ENCODE measurements at regions of chr17 and their contacts with region 1.

Region 1: DNA sequence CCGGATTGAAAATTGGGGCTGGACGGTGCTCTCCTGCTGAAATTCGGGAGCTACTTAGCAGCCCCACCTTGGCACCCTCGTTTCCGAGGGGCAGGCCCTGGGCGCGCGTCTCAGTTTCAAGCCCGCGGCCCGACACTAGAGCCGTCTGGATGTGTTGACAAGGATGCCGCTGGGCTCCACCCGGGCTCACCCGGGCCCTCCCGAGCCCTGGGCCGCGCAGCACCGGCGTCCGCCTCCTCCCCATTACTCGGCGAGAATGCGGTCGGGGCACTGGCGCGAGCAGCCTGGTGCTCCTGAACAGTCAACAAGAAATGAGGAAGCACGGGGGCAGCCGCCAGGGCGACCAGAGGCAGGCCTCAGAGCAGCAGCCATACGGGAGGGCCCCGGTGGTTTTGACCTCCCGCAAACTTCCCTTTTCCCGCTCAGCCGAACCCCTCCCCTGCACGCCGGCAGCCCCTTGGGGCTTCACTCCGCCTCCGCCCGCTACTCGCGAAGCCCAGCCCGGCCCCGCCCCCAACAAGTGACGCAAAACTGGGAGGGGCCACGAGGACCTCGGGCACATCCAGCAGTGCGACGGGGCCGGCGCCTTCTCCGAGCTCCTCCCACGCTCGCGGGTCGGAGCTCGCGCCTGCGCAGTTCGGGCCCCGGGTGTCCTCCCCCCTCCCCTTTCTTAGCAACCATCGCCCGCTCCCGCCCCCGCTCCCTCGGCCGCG is 447 bp upstream of the SEC14L1 start:
- DNase-seq: peak; percentile 98 to 100 (median 100)
- ATAC-seq: peak; percentile 86 to 87
- H3K4me3 Mint-ChIP-seq: peak overlapping the region; percentile 69 to 90 (median 83)
- H3K27ac Mint-ChIP-seq: peak overlapping the region; percentile 77 to 96 (median 94)
- H3K4me1 Mint-ChIP-seq: peaks cover 17 to 69% (median 51%) of the 10 kb centered on the region in 4 donors
- H3K27me3 Mint-ChIP-seq: no peaks in the 10 kb centered on the region

Region 2: GRCh38 chr17:76753061-76753961 is 387.0 kb before region 1 on chr17:
- POLR2A ChIA-PET with region 1: interaction called, 10 read pairs
- DNase-seq: peak in 9 of 10 donors; percentile 23 to 92 (median 71)
- ATAC-seq: peak; percentile 90 to 94
- H3K4me3 Mint-ChIP-seq: peak overlapping the region; percentile 84 to 96 (median 90)
- H3K27ac Mint-ChIP-seq: peak overlapping the region; percentile 90 to 100 (median 99)
- H3K4me1 Mint-ChIP-seq: peaks cover 14 to 25% (median 24%) of the 10 kb centered on the region in 4 donors
- H3K27me3 Mint-ChIP-seq: no peaks in the 10 kb centered on the region

Region 3: DNA sequence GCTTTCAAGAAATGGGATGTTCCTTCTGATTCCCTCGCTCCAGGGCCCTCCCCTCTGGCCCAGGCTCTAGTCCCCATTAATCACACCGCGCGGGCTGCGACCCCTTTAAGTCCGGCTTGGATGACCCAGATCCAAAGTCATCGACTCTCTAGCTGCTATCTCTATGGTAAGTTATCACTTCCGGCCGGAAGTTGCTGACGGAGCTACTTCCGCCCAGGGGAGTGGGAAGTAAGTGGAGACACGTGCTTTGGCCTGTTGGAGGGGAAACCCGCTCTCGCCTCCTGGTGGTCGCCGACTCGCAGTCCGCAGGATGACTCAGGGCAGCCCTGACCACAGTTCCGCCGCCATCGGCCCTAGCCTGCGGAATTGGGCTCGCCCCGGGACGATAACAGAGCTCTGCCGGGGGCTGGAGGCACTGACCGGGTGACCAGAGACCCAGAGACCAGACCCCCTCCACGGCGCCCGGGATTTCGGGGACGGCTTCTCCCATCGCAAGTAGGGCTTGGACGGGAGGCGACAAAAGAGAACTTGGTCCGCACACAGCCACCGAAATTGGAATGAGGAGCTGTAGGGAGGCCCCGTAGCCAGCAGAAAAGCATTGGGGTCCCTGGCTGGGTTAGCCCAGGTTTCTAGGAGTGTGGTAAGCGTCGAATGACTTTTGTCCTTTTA is 51.7 kb before region 1 on chr17:
- POLR2A ChIA-PET with region 1: interaction called, 37 read pairs
- DNase-seq: peak; percentile 61 to 92 (median 84)
- ATAC-seq: peak; percentile 91 to 92
- H3K4me3 Mint-ChIP-seq: peak overlapping the region; percentile 87 to 100 (median 97)
- H3K27ac Mint-ChIP-seq: peak overlapping the region; percentile 94 to 99 (median 99)
- H3K4me1 Mint-ChIP-seq: peaks cover 19 to 62% (median 50%) of the 10 kb centered on the region in 4 donors
- H3K27me3 Mint-ChIP-seq: peaks cover 0 to 7% (median 0%) of the 10 kb centered on the region in 5 donors

Region 4: GRCh38 chr17:77098884-77099545 is 41.3 kb before region 1 on chr17:
- POLR2A ChIA-PET with region 1: interaction called, 12 read pairs
- DNase-seq: peak in 8 of 10 donors; percentile 42 to 82 (median 70)
- ATAC-seq: peak; percentile 95 to 98
- H3K4me3 Mint-ChIP-seq: peak overlapping the region; percentile 34 to 70 (median 56)
- H3K27ac Mint-ChIP-seq: peak overlapping the region; percentile 91 to 99 (median 94)
- H3K4me1 Mint-ChIP-seq: peaks cover 21 to 42% (median 36%) of the 10 kb centered on the region in 4 donors
- H3K27me3 Mint-ChIP-seq: no peaks in the 10 kb centered on the region

Region 5: GRCh38 chr17:77127735-77128361 is 12.5 kb before region 1 on chr17:
- POLR2A ChIA-PET with region 1: interaction called, 48 read pairs
- DNase-seq: peak; percentile 42 to 94 (median 79)
- ATAC-seq: peak; percentile 92 to 95
- H3K4me3 Mint-ChIP-seq: peak overlapping the region; percentile 70 to 89 (median 78)
- H3K27ac Mint-ChIP-seq: peak overlapping the region; percentile 88 to 98 (median 96)
- H3K4me1 Mint-ChIP-seq: peaks cover 12 to 40% (median 28%) of the 10 kb centered on the region in 4 donors
- H3K27me3 Mint-ChIP-seq: no peaks in the 10 kb centered on the region

Region 6: DNA sequence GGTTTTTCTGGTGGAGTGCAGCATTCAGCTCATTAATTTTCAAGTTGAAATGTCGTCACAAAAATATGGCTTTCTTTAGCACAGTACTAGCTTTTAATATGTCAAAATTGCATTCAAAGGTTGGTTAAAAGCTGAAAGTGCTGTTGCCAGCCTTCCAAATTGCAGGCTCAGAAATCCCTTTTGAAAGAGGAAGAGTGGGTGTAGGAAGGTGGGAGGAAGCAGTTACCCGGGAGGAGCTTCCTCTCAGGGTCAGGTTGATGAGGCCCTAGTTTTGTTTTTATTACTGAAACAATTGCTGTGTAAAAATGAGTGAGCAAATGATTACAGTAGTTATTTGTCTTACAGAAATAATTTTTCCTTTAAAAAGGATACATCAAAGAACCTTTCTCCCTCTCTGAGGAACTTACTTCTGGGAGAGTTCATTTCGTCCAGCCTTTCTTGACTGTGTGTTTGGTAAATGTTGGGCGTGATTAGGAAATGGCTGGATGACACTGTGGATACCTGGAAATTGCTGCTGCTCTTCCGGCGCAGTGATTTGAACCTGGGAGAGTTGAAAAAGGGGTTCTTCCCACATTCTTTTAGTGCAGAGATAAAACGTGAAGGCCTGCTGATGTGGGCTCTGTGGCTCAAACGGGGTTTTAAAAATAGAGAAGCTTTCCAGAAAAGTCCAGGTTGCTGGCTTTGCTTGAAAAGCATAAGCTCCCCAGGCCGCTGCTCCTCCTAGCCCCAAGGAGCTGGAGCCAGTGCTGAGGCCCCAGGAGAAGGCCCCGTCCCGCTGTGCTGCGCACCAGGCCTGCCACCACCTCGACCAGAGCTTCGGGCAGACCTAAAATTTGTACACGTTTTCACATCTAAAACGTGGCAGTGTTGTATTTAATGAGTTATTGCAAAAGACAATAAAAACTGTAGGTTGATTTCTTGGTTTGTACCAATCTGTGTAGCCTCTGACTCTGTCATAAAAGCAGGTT is 42.2 kb after region 1 on chr17:
- POLR2A ChIA-PET with region 1: interaction called, 19 read pairs
- DNase-seq: no peak
- ATAC-seq: no peak
- H3K4me3 Mint-ChIP-seq: peak overlapping the region in 9 of 10 donors; percentile 46 to 77 (median 67)
- H3K27ac Mint-ChIP-seq: peak overlapping the region; percentile 81 to 94 (median 88)
- H3K4me1 Mint-ChIP-seq: peaks cover 22 to 46% (median 32%) of the 10 kb centered on the region in 4 donors
- H3K27me3 Mint-ChIP-seq: no peaks in the 10 kb centered on the region